Left colon (tissue), 2 donors: ENCODE measurements at regions of chr2 and their contacts with region 1.

Region 1: GRCh38 chr2:17851731-17852585 is 26.5 kb upstream of the KCNS3 start:
- DNase-seq: peak in 1 of 2 donors; percentile 48
- ATAC-seq: peak; percentile 74

Region 2: GRCh38 chr2:18178736-18179349 is 326.9 kb after region 1 on chr2:
- intact Hi-C with region 1: loop called in 1 of 2 experiments (anchors 5 kb)
- DNase-seq: peak in 1 of 2 donors; percentile 20
- ATAC-seq: peak; percentile 49

Region 3: GRCh38 chr2:18378020-18378653 is 526.2 kb after region 1 on chr2:
- intact Hi-C with region 1: loop called in 1 of 2 experiments (anchors 10 kb)
- DNase-seq: peak in 1 of 2 donors; percentile 12
- ATAC-seq: no peak